GM13977 (cell line): ENCODE measurements at regions of chr16 and their contacts with region 1.

Region 1: DNA sequence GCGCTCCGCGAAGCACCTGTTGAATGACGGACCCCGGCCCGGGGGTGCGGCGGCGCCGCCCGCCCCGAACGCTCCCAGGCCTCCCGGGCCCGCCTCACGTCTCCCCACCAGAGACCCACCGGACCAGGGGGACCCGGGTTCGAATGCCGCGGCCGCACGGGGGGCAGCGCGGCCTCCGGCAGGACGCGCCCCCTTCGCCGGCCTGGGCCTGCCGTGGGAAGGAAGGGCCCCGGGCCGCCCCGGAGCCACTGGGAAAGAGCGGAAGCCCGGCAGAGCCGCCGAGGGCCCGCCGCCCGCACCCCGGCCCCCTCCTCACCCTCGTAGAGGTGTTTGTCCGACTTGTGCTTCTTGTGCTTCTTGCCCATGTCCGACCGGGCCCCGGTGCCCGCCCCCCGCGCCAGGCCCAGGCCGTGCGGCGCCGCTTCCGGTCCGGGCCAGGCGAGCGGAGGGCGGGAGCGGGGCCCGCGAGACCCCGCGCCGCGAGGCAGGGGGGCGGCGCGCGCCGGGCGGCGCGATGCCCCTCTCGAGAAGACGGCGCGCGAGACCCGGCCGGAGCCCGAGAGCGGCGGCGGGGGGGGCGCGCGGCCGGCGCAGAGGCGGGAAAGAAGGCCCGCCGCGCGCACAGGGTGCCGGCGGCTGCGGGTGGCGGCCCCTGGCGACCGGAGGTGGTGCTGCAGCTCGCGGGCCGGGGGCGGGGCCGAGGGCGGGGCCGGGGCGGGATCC is at the start of gene BRD7:
- DNase-seq: peak; percentile 96
- CTCF ChIP-seq: peak; percentile 78

Region 2: GRCh38 chr16:50509521-50510341 is 141.2 kb after region 1 on chr16:
- in situ Hi-C with region 1: loop called (anchors 10 kb)
- DNase-seq: peak; percentile 45
- CTCF ChIP-seq: peak; percentile 74

Region 3: GRCh38 chr16:50665128-50665878 is 296.7 kb after region 1 on chr16:
- in situ Hi-C with region 1: loop called (anchors 10 kb)
- DNase-seq: peak; percentile 74
- CTCF ChIP-seq: peak; percentile 78

Region 4: DNA sequence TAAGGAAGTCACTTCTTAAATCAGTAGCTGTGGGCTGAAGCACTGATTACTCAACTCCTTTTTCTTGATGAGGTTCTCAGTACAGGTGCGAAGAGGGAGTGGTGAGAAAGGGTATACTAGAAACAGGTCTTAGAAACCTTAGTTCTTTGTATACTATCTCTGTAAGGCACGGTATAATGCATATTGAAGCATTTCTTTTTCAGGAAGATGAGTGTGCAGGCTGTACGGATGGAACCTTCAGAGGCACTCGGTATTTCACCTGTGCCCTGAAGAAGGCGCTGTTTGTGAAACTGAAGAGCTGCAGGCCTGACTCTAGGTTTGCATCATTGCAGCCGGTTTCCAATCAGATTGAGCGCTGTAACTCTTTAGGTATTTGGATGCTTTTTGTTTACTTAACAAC is 412.5 kb after region 1 on chr16:
- in situ Hi-C with region 1: loop called (anchors 25 kb)
- DNase-seq: no peak
- CTCF ChIP-seq: no peak